MCF 10A (cell line): ENCODE measurements at regions of chr12 and their contacts with region 1.

Region 1: GRCh38 chr12:95790033-95790911 is at the start of gene NTN4:
- DNase-seq: peak; percentile 49
- H3K4me3 Mint-ChIP-seq: peak within 1 kb of the TSS; percentile 80
- H3K27ac Mint-ChIP-seq: peak within 1 kb of the TSS; percentile 83
- H3K4me1 Mint-ChIP-seq: no peaks in the 10 kb centered on the region
- H3K27me3 Mint-ChIP-seq: no peaks in the 10 kb centered on the region
- CTCF ChIP-seq: no peak
- total RNA-seq, gene NTN4: 53.0 and 96.4 TPM in 2 replicates

Region 2: DNA sequence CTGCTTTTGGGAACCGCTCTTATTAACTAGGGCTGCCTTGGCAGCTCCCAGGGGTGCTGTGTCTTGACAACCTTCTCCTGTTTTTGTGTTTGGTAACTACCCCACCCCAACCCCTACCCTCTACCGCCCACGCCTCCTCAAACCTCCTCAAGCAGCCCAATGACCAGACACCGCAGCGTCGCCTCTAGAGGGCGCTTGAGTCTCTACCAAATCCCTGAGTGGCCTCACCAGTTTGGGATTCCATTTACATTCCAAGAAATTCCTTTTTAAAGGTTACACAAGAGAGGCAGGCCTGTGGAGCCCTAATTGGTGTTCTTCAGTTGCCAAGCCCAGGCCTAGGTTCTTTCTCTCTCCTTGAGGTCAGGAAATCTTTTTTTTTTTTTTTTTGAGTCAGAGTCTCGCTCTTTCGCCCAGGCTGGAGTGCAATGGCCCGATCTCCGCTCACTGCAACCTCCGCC is 166.7 kb before region 1 on chr12:
- CTCF ChIA-PET with region 1: interaction called, 4 read pairs
- POLR2A ChIA-PET with region 1: no interaction called
- intact Hi-C with region 1: loop called (anchors 1 kb)
- DNase-seq: peak; percentile 90
- H3K4me3 Mint-ChIP-seq: no peak overlapping the region
- H3K27ac Mint-ChIP-seq: no peak overlapping the region
- H3K4me1 Mint-ChIP-seq: no peaks in the 10 kb centered on the region
- H3K27me3 Mint-ChIP-seq: no peaks in the 10 kb centered on the region
- CTCF ChIP-seq: peak; percentile 63

Region 3: DNA sequence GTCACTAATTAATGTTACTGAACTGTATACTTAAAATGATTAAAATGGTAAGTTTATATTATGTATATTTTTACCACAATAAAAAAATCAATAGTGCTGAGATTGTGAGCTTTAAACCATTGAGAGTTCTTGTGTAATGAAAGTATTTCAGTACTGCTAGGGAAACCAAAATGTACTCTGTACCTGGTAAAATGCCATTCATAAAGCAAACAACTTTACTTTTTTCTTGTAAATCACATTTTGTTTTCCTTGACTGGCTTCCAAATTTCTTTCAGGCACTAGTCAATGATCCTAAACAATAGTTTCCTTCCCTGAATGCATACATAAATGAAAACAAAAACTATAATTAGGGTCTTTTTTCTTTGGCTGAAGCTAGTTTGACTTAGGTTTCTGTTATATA is 39.1 kb after region 1 on chr12:
- CTCF ChIA-PET with region 1: no interaction called
- POLR2A ChIA-PET with region 1: no interaction called
- intact Hi-C with region 1: no loop called
- DNase-seq: no peak
- H3K4me3 Mint-ChIP-seq: no peak overlapping the region
- H3K27ac Mint-ChIP-seq: no peak overlapping the region
- H3K4me1 Mint-ChIP-seq: no peaks in the 10 kb centered on the region
- H3K27me3 Mint-ChIP-seq: peaks cover 28% of the 10 kb centered on the region
- CTCF ChIP-seq: no peak

Region 4: GRCh38 chr12:95848575-95849388 is 58.5 kb after region 1 on chr12:
- CTCF ChIA-PET with region 1: no interaction called
- POLR2A ChIA-PET with region 1: no interaction called
- intact Hi-C with region 1: no loop called
- DNase-seq: peak; percentile 58
- H3K4me3 Mint-ChIP-seq: no peak overlapping the region
- H3K27ac Mint-ChIP-seq: no peak overlapping the region
- H3K4me1 Mint-ChIP-seq: no peaks in the 10 kb centered on the region
- H3K27me3 Mint-ChIP-seq: peaks cover 10% of the 10 kb centered on the region
- CTCF ChIP-seq: peak; percentile 41